ENCODE measurements at regions of chr9 and their contacts with region 1.

Region 1: DNA sequence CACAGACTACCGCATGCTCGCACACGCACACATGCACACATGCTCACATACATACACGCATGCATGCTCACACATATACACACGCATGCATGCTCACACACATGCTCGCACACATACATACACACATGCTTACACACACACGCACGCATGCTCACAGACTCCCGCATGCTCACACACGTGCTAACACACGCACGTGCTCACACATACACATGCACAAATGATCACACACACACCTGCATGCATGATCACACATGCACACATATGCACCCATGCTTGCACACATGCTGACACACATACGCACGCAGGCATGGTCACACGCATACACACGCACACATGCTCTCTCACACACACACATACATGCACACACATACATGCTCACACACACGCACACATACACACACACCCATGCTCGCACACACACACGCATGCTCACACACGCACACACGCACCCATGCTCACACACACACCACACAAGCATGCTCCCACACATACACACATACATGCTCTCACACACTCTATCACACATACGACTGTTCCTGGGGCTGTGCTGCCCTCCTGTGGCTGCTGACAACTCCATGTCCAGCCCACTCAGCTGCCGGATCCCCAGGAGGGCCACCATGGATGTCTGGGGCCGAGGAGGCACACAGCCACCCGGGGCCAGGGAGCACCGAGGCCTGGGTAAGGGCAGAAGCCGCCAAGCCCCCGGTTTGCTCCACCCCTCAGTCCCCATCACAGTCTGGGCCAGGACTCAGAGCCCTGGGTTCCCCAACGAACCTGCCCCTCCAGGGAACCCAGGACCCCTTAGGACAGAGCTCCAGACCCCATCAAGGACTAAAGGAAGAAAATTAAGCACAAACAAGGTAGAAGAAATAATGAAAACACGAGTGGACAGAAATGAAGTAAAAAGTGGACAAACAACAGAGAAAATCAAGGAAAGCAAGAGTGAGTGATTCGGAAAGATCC is 31.4 kb upstream of the EGFL7 start:
- DNase-seq: peak; percentile 67 to 93 (median 78)
- ATAC-seq: peak; percentile 92
- H3K4me3 ChIP-seq: no peak overlapping the region
- H3K27ac ChIP-seq: no peak overlapping the region
- H3K4me1 ChIP-seq: peaks cover 4 to 38% of the 10 kb centered on the region in 2 donors
- H3K27me3 ChIP-seq: peaks cover 0 to 26% of the 10 kb centered on the region in 2 donors
- CTCF ChIP-seq: peak; percentile 73 to 93

Region 2: DNA sequence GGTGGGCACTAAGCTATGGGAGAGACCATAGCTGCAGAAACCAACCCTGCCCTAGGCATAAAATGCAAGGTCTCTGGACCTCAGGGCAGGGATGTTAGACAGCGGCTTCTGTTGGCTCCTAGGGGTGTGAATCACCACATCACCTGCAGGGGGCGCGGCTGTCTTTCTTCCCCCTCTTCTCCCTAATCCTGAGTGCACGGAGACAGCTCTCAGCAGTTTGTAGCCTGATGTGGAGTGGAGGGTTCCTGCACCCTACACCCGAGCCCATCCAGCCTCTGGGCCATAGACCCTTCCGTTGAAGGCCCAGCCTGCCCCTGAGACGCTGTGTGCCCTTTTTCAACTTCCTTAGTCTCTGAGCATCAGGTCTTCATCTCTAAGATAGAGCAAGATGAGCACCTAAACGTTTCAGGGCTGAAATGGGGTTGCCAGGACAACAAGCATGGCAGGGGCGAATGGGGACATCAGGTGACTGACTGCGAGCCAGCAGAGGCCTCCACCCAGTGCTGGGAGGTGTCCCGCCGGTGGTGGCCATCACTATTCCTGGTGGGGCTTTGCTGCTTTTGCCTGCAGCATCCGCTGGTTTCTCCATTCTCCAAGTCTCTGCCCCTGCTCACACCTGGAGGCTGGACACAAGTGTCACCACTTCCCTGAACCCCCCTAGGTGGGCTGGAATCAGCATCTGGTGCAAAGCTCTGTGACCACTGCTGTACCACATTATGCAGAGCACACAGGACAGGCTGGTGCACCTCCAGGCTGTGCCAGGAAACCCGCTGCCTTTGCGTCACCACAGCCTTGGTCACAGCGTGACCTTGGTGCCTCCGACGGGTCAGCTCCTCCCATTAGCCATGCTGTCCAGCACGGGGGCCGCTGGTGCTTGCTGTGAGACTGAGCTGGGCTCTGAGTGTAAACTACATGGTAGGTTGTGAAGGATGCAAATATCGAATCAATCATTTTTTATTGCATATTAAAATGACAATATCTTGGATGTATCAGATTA is 146.0 kb before region 1 on chr9:
- intact Hi-C with region 1: loop called (anchors 2 to 5 kb)
- DNase-seq: peak; percentile 70 to 94 (median 83)
- ATAC-seq: peak; percentile 33
- H3K4me3 ChIP-seq: no peak overlapping the region
- H3K27ac ChIP-seq: no peak overlapping the region
- H3K4me1 ChIP-seq: peaks cover 16 to 49% of the 10 kb centered on the region in 2 donors
- H3K27me3 ChIP-seq: no peaks in the 10 kb centered on the region
- CTCF ChIP-seq: peak; percentile 85 to 97